Heart right ventricle (tissue), 16 donors: ENCODE measurements at regions of chr19 and their contacts with region 1.

Region 1: GRCh38 chr19:41206926-41207750 is 11.9 kb upstream of the AXL start:
- DNase-seq: peak; percentile 84
- ATAC-seq: peak; percentile 75 to 92 (median 90)
- H3K4me3 ChIP-seq: peak overlapping the region in 5 of 10 donors; percentile 5 to 27 (median 19)
- H3K27ac ChIP-seq: peak overlapping the region; percentile 51 to 76 (median 70)
- H3K4me1 ChIP-seq: peaks cover 0 to 19% (median 0%) of the 10 kb centered on the region in 9 donors
- H3K27me3 ChIP-seq: no peaks in the 10 kb centered on the region
- CTCF ChIP-seq: no peak

Region 2: GRCh38 chr19:41255171-41255570 is 48.0 kb after region 1 on chr19:
- intact Hi-C with region 1: loop called in 3 of 10 experiments (anchors 2 to 5 kb)
- DNase-seq: no peak
- ATAC-seq: no peak
- H3K4me3 ChIP-seq: no peak overlapping the region
- H3K27ac ChIP-seq: no peak overlapping the region
- H3K4me1 ChIP-seq: peaks cover 0 to 4% (median 0%) of the 10 kb centered on the region in 9 donors
- H3K27me3 ChIP-seq: peaks cover 0 to 5% (median 0%) of the 10 kb centered on the region in 7 donors
- CTCF ChIP-seq: no peak

Region 3: GRCh38 chr19:41298348-41298964 is 91.3 kb after region 1 on chr19:
- intact Hi-C with region 1: no loop called
- DNase-seq: peak; percentile 81 to 88
- ATAC-seq: peak; percentile 77 to 90 (median 86)
- H3K4me3 ChIP-seq: no peak overlapping the region
- H3K27ac ChIP-seq: peak overlapping the region; percentile 80 to 93 (median 89)
- H3K4me1 ChIP-seq: peaks cover 16 to 78% (median 58%) of the 10 kb centered on the region in 9 donors
- H3K27me3 ChIP-seq: no peaks in the 10 kb centered on the region
- CTCF ChIP-seq: no peak

Region 4: GRCh38 chr19:41310033-41310758 is 103.1 kb after region 1 on chr19 and contains the start of gene CCDC97:
- intact Hi-C with region 1: loop called (anchors 1 to 5 kb)
- DNase-seq: peak; percentile 88 to 89
- ATAC-seq: peak; percentile 82 to 93 (median 87)
- H3K4me3 ChIP-seq: peak within 1 kb of the TSS; percentile 15 to 84 (median 70)
- H3K27ac ChIP-seq: peak within 1 kb of the TSS; percentile 89 to 99 (median 94)
- H3K4me1 ChIP-seq: peaks cover 6 to 64% (median 39%) of the 10 kb centered on the region in 9 donors
- H3K27me3 ChIP-seq: no peaks in the 10 kb centered on the region
- CTCF ChIP-seq: peak in 2 of 9 donors; percentile 8 to 14
- total RNA-seq, gene CCDC97: 12.6 to 19.2 (median 16.4) TPM

Region 5: DNA sequence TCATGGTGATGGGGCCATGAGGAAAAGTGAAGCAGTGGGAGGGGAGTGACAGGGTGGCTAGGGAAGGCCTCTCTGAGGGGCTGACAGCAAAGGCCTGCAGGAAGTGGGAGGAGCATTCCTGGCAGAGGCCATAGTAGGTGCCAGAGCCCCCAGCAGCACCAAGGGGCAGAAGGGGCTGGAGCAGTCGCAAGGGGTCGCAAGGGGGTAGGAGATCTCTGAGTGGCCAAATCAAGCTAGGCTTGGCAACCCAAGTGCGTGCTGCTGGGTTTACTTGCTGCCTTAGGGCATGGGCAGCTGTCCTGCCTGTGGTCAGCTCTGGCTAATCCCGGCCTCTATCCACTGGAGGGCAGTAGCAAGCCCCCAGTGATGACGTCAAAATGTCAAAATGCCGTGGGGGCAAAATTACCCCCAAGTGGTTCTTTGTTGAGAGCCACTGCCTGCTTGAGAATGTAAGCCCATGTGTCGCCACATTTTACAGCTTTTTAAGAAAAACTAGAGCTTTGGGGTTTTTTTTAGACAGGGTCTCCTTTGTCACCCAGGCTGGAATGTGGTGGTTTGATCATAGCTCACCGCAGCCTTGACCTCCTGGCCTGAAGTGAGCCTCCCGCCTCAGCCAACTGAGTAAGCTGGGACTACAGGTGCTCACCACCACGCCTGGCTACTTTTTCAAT is 114.6 kb after region 1 on chr19:
- intact Hi-C with region 1: no loop called
- DNase-seq: no peak
- ATAC-seq: peak in 1 of 8 donors; percentile 9
- H3K4me3 ChIP-seq: no peak overlapping the region
- H3K27ac ChIP-seq: peak overlapping the region in 9 of 10 donors; percentile 32 to 96 (median 90)
- H3K4me1 ChIP-seq: peaks cover 35 to 58% (median 56%) of the 10 kb centered on the region in 9 donors
- H3K27me3 ChIP-seq: no peaks in the 10 kb centered on the region
- CTCF ChIP-seq: peak; percentile 45 to 80 (median 74)

Region 6: GRCh38 chr19:41439441-41440222 is 232.5 kb after region 1 on chr19 and contains the start of gene DMAC2:
- intact Hi-C with region 1: loop called in 1 of 10 experiments (anchors 10 kb)
- DNase-seq: peak; percentile 93 to 97
- ATAC-seq: peak; percentile 95 to 99 (median 98)
- H3K4me3 ChIP-seq: peak within 1 kb of the TSS; percentile 54 to 83 (median 74)
- H3K27ac ChIP-seq: peak within 1 kb of the TSS; percentile 83 to 97 (median 96)
- H3K4me1 ChIP-seq: peaks cover 0 to 31% (median 15%) of the 10 kb centered on the region in 9 donors
- H3K27me3 ChIP-seq: peaks cover 0 to 6% (median 0%) of the 10 kb centered on the region in 7 donors
- CTCF ChIP-seq: peak in 8 of 9 donors; percentile 46 to 74 (median 58)
- total RNA-seq, gene DMAC2: 80.8 to 139 (median 101) TPM

Region 7: GRCh38 chr19:41570639-41571112 is 363.5 kb after region 1 on chr19:
- intact Hi-C with region 1: loop called in 1 of 10 experiments (anchors 10 kb)
- DNase-seq: peak; percentile 76 to 83
- ATAC-seq: peak; percentile 87 to 97 (median 94)
- H3K4me3 ChIP-seq: no peak overlapping the region
- H3K27ac ChIP-seq: no peak overlapping the region
- H3K4me1 ChIP-seq: peaks cover 0 to 7% (median 0%) of the 10 kb centered on the region in 9 donors
- H3K27me3 ChIP-seq: peaks cover 0 to 59% (median 31%) of the 10 kb centered on the region in 7 donors
- CTCF ChIP-seq: peak; percentile 63 to 93 (median 89)